ENCODE measurements at regions of chr3 and their contacts with region 1.

Region 1: GRCh38 chr3:134473868-134474546 is 11.8 kb downstream of the ANAPC13 start:
- DNase-seq: peak; percentile 80
- ATAC-seq: peak; percentile 90
- H3K4me3 ChIP-seq: no peak overlapping the region
- H3K27ac ChIP-seq: no peak overlapping the region
- H3K4me1 ChIP-seq: peaks cover 29% of the 10 kb centered on the region
- H3K27me3 ChIP-seq: no peaks in the 10 kb centered on the region
- CTCF ChIP-seq: peak; percentile 78
- EP300 ChIP-seq: no peak
- POLR2A ChIP-seq: no peak
- RAD21 ChIP-seq: peak; percentile 63

Region 2: GRCh38 chr3:134212906-134213665 is 260.9 kb before region 1 on chr3:
- CTCF ChIA-PET with region 1: no interaction called
- POLR2A ChIA-PET with region 1: no interaction called
- in situ Hi-C with region 1: loop called (anchors 10 kb)
- intact Hi-C with region 1: loop called (anchors 5 kb)
- DNase-seq: peak; percentile 66
- ATAC-seq: peak; percentile 97
- H3K4me3 ChIP-seq: no peak overlapping the region
- H3K27ac ChIP-seq: no peak overlapping the region
- H3K4me1 ChIP-seq: no peaks in the 10 kb centered on the region
- H3K27me3 ChIP-seq: no peaks in the 10 kb centered on the region
- CTCF ChIP-seq: peak; percentile 95
- EP300 ChIP-seq: no peak
- POLR2A ChIP-seq: no peak
- RAD21 ChIP-seq: peak; percentile 70

Region 3: DNA sequence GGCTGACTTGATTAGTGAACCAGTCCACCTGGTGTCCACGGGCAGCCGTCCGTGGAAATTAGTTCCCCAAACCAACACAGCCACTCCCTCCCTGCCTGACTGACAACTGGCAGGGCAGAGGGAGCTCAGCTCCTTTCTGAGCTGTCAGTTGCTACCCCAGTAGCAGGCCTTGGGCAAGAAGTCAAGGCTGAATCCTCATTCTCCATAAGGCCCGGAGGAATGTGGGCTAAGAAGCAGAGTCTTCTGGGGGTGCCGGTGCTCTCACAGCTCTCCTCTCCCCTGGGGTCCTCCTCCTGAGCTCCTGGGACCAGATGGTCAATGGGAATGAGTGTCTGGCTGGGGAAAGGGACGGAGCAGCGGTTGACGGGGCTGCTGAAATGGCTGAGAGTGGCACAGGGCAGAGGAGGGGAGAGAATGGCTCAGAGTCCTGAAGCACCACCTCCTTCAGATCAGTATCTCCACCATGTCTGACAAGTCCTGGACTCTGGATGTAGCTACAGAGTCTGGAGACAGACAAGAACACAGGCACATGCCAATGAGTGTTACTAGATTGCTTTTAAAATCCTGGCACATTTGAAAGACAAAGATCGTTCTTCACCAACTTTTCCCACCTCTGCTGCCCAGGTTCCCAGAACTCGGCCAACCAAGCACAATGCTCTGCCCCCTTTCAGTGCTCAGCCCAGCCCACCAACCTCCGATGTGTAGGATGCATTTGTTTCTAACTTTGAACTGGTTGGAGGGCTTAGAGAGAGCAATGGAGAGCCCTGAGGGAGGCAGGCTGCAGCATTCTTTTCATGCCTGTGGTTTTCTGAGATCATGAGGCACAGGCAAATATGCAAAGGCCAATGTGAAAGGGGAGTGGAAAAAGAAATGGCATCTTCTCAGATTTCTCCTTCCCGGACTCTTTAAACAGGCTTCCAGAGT is 116.5 kb before region 1 on chr3:
- CTCF ChIA-PET with region 1: interaction called, 6 read pairs
- POLR2A ChIA-PET with region 1: interaction called, 4 read pairs
- in situ Hi-C with region 1: no loop called
- intact Hi-C with region 1: loop called (anchors 1 kb)
- DNase-seq: peak; percentile 87
- ATAC-seq: peak; percentile 82
- H3K4me3 ChIP-seq: no peak overlapping the region
- H3K27ac ChIP-seq: peak overlapping the region; percentile 56
- H3K4me1 ChIP-seq: peaks cover 70% of the 10 kb centered on the region
- H3K27me3 ChIP-seq: no peaks in the 10 kb centered on the region
- CTCF ChIP-seq: no peak
- EP300 ChIP-seq: peak in 1 of 2 experiments; percentile 47; a peak in 2 of 4 replicates
- POLR2A ChIP-seq: no peak
- RAD21 ChIP-seq: no peak

Region 4: GRCh38 chr3:134618478-134619300 is 144.7 kb after region 1 on chr3:
- CTCF ChIA-PET with region 1: no interaction called
- POLR2A ChIA-PET with region 1: no interaction called
- in situ Hi-C with region 1: no loop called
- intact Hi-C with region 1: no loop called
- DNase-seq: no peak
- ATAC-seq: no peak
- H3K4me3 ChIP-seq: no peak overlapping the region
- H3K27ac ChIP-seq: no peak overlapping the region
- H3K4me1 ChIP-seq: 0 out of 2 replicates have a peak, but pooled peaks cover 8% of the 10 kb centered on the region
- H3K27me3 ChIP-seq: peaks cover 0 to 3% of the 10 kb centered on the region in 2 experiments; a peak in 1 of 5 replicates
- CTCF ChIP-seq: no peak
- EP300 ChIP-seq: no peak
- POLR2A ChIP-seq: no peak
- RAD21 ChIP-seq: no peak

Region 5: DNA sequence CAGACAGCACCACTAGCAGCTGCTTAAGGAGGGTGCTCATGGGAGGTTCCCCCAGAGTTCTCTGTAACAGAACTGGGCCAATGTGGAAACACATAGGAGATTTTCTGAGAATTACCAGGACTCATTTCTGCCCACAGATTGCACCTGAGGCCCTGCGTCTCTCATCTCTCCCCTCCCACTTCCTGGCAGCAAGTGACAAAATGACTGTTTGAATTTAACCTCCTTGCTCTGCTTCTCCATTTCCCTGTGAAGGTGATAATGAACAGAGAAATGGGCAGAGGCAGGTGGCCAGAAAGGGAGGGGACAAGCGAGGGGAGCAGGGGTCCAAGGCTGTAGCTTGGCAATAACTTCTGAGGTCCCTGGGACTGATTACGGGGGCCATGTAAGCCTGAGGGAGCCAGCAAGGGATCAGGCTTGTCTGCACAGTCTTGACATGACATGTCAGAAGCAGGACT is 329.1 kb after region 1 on chr3:
- CTCF ChIA-PET with region 1: no interaction called
- POLR2A ChIA-PET with region 1: no interaction called
- in situ Hi-C with region 1: no loop called
- intact Hi-C with region 1: no loop called
- DNase-seq: no peak
- ATAC-seq: no peak
- H3K4me3 ChIP-seq: no peak overlapping the region
- H3K27ac ChIP-seq: no peak overlapping the region
- H3K4me1 ChIP-seq: no peaks in the 10 kb centered on the region
- H3K27me3 ChIP-seq: peaks cover 1 to 5% of the 10 kb centered on the region in 2 experiments; a peak in 1 of 5 replicates
- CTCF ChIP-seq: no peak
- EP300 ChIP-seq: no peak
- POLR2A ChIP-seq: no peak
- RAD21 ChIP-seq: no peak